ENCODE measurements at regions of chr3 and their contacts with region 1.

Region 1: DNA sequence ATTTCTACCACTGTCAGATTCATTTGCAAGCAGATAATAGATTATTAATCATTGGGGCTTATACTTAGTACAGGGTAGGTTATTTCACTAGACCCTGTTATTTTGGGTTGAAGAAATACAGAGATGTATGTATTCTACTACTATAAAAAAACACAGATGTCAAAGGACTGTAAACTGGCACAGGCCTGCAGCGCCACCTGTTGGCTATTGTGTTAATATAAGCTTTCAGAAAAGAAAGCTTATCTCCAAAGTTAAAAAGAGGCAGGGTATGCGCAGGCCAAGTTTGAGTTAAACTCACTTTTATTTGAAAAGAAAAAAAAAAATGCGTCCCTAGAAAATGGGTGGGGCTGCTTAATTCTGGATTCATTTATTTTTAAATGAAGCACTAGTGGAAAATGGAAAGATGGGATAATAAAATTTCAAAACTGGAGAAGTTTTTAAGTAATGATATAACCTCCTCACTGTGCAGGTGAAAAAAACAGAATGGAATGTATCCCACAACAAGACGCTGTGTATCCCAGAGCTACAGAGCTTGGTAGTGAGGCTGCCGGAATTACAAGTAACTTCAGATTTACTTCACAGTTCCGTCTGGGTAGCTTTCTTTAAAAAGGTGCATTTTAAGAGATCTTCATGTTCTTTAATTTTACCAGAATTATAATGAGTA is 407.2 kb upstream of the TGFBR2 start:
- DNase-seq: peak; percentile 53 to 89 (median 68)
- ATAC-seq: peak; percentile 63
- H3K4me3 ChIP-seq: no peak overlapping the region
- H3K4me1 ChIP-seq: no peaks in the 10 kb centered on the region
- CTCF ChIP-seq: peak; percentile 47

Region 2: DNA sequence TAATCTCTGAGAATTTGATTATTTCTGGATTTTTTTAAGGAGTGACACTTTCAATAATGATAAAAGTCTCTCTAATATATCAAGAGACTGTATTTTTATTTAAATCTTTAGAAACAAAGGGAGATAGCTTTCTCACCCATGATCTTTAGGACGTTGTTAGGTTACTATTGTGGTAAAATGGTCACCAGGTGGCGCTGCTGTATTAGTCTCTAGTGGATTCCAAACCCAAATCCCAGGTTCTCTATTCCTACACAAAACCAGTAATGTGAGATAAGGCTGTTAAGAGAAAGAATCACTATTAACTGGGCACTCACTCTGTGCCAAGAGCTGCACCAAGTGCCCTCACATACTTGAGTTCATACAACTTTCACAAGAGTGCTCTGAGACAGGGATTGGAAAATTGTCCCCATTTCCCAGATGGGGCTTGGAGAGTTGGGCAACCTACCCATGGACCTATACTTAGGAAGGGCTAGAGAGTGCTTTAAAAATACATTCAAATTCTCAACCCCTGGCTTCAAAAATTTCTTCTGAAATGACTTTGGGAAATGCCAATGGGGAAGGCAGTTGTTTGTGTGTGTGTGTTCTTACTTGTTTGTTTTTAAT is 186.2 kb before region 1 on chr3:
- intact Hi-C with region 1: loop called in 1 of 2 experiments (anchors 5 kb)
- DNase-seq: peak in 2 of 3 donors; percentile 35 to 94
- ATAC-seq: peak; percentile 71
- H3K4me3 ChIP-seq: no peak overlapping the region
- H3K4me1 ChIP-seq: no peaks in the 10 kb centered on the region
- CTCF ChIP-seq: peak; percentile 9

Region 3: DNA sequence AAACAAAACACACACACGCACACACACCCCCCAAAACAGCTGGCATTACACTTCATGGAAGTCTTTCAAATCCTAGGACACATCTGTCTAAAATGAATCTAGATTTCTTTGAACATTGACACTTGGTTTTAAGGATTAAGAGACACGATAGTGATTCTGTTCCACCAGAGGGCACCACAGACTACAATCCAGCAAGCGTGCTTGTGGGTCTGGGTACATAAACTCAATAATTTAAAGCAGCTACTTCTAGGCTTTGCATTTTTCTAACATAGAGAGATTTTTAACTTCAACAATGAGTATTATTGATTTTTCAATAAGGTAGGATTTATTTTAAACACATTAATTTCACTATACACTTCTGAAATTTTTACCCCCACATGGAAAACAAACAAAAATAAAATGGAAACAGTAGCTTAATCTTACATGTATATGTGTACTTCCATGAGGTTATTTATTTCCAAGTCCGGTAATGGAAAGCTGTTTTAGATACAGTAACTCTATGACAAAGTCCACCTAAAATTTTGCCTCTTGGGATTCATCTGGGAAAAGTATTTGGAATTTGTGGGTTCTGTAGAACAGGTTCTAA is 156.9 kb before region 1 on chr3:
- intact Hi-C with region 1: loop called in 1 of 2 experiments (anchors 10 kb)
- DNase-seq: peak in 2 of 3 donors; percentile 35 to 86
- ATAC-seq: peak; percentile 71
- H3K4me3 ChIP-seq: no peak overlapping the region
- H3K4me1 ChIP-seq: no peaks in the 10 kb centered on the region
- CTCF ChIP-seq: peak; percentile 41

Region 4: DNA sequence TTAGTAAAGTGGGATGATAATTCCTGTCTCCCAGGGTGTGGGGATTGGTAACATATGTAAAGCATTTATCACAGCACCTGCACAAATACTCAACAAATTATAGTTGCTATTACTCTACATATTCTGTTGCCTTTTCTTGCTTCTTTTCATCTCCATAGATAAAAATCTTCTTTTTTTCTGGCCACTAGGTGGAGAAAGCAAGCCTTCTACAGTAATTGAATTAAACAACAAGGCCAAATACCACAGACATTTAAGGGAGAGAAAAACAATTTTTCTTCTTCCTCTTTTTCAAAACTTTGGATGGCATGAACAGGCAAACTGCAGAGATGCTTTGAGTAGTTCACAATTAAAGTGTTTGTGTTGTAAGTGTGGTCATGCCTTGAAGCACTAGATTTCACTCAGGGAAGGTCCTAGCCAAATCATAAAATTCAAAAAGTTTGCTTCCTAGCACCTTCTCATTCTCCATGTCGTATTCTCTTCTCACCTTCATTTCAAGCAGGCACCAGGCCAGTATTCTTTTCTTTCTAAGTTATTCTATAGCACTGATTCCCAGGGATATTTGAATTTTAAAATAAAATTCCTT is 86.2 kb before region 1 on chr3:
- intact Hi-C with region 1: loop called (anchors 5 to 10 kb)
- DNase-seq: no peak
- ATAC-seq: peak; percentile 32
- H3K4me3 ChIP-seq: no peak overlapping the region
- H3K4me1 ChIP-seq: peaks cover 6% of the 10 kb centered on the region
- CTCF ChIP-seq: peak; percentile 19

Measured in mucosa of descending colon (tissue), 3 donors.